Ovary (tissue), 10 donors: ENCODE measurements at regions of chr6 and their contacts with region 1.

Region 1: GRCh38 chr6:41591859-41592502 is 45.8 kb downstream of the FOXP4 start:
- DNase-seq: peak; percentile 58 to 84 (median 82)
- H3K4me3 ChIP-seq: no peak overlapping the region
- H3K27ac ChIP-seq: no peak overlapping the region
- H3K4me1 ChIP-seq: no peaks in the 10 kb centered on the region
- H3K27me3 ChIP-seq: no peaks in the 10 kb centered on the region
- CTCF ChIP-seq: peak; percentile 76 to 91 (median 85)
- EP300 ChIP-seq: no peak
- POLR2A ChIP-seq: no peak

Region 2: GRCh38 chr6:41367700-41368099 is 224.3 kb before region 1 on chr6:
- intact Hi-C with region 1: loop called (anchors 2 to 5 kb)
- DNase-seq: peak; percentile 20 to 56 (median 37)
- H3K4me3 ChIP-seq: no peak overlapping the region
- H3K27ac ChIP-seq: no peak overlapping the region
- H3K4me1 ChIP-seq: peaks cover 2% of the 10 kb centered on the region
- H3K27me3 ChIP-seq: peaks cover 3% of the 10 kb centered on the region
- CTCF ChIP-seq: peak in 1 of 3 donors; percentile 12
- EP300 ChIP-seq: no peak
- POLR2A ChIP-seq: no peak

Region 3: GRCh38 chr6:41424370-41425058 is 167.5 kb before region 1 on chr6:
- intact Hi-C with region 1: loop called (anchors 5 kb)
- DNase-seq: peak; percentile 71 to 89 (median 85)
- H3K4me3 ChIP-seq: no peak overlapping the region
- H3K27ac ChIP-seq: no peak overlapping the region
- H3K4me1 ChIP-seq: peaks cover 14% of the 10 kb centered on the region
- H3K27me3 ChIP-seq: no peaks in the 10 kb centered on the region
- CTCF ChIP-seq: peak; percentile 61 to 74 (median 66)
- EP300 ChIP-seq: no peak
- POLR2A ChIP-seq: no peak

Region 4: GRCh38 chr6:41463062-41463930 is 128.7 kb before region 1 on chr6:
- intact Hi-C with region 1: loop called in 3 of 4 experiments (anchors 5 to 10 kb)
- DNase-seq: peak; percentile 45 to 80 (median 73)
- H3K4me3 ChIP-seq: no peak overlapping the region
- H3K27ac ChIP-seq: no peak overlapping the region
- H3K4me1 ChIP-seq: no peaks in the 10 kb centered on the region
- H3K27me3 ChIP-seq: no peaks in the 10 kb centered on the region
- CTCF ChIP-seq: peak; percentile 19 to 53 (median 45)
- EP300 ChIP-seq: no peak
- POLR2A ChIP-seq: no peak

Region 5: DNA sequence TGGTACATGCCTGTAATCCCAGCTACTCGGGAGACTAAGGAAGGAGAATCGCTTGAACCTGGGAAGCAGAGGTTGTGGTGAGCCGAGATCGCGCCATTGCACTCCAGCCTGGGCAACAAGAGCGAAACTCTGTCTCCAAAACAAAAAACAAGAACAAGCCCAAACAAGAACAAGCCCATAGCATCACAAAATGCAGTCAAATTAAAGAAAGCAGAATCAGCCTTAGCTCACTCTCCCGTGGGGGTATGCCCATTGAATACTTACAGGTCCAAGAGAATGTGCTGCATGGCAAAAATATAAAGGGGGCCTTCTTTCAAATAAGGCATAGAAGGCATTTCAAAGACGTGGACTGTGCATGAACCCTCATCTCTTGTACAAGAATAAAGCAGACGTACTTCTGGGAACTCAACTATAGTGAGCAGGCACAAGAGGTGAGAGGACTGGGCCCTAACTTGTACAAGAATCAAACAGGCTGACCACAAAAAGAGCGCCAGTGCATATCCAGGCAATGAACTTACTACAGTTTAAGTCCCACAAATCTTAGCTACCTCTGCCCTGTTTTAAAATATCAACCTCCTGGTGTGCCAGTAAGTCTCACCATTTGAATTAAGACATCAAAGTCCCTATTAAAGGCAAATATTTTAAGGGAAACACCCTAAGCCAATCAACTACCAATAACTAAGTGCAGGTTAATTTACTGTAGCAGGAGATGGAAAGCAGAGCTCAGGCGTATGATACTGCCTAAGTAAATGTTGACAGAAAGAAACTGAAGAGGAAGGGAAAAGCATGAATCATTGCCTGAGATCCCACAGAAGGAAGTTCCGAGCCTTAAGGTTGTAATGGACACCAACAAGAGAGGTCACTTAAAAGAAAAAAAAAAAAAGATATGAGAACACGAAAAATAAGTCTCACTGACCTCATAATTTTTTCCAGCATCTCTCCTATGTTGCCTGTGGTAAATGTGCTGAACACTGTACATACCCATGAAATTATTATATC is 232.9 kb after region 1 on chr6:
- intact Hi-C with region 1: no loop called
- DNase-seq: no peak
- H3K4me3 ChIP-seq: no peak overlapping the region
- H3K27ac ChIP-seq: no peak overlapping the region
- H3K4me1 ChIP-seq: no peaks in the 10 kb centered on the region
- H3K27me3 ChIP-seq: no peaks in the 10 kb centered on the region
- CTCF ChIP-seq: no peak
- EP300 ChIP-seq: no peak
- POLR2A ChIP-seq: no peak